Endothelial cell of umbilical vein (primary cell): ENCODE measurements at regions of chr16 and their contacts with region 1.

Region 1: DNA sequence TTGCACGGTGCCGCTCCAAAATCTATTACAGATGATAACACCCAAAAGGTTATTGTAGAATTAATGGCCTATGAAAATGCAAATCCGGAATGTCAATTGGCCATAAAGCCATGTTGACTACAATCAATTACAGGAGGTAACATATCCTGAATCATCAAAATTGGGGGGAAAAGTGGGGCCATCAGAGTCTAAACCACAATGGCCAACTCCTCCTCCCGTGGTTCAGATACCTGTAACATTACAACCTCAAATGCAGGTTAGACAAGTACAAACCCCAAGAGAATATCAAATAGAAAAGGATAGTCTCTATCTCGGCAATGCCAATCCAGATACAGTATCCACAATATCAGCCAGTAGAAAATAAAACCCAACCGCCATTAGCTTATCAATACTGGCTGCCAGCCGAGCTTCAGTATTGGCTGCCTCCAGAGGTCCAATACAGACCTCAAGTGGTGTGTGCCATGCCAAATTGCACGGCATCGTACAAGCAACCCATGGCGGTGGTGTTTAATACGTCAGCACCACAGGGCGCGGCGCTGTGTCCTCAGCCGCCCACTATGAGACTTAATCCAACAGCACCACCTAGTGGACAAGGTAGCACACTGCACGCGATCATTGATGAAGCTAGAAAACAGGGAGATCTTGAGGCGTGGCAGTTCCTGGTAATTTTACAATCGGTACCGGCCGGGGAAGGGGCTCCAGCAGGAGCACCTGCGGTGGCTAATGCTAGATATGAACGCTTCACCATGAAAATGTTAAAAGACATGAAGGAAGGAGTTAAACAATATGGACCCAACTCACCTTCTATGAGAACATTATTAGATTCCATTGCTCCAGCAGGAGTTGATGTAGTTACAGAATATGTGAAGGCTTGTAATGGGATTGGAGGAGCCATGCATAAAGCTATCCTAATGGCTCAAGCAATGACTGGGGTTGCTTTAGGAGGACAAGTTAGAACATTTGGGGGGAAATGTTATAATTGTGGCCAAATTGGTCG is 15.2 kb downstream of the FLYWCH1 start:
- DNase-seq: peak; percentile 81
- H3K4me3 ChIP-seq: peak overlapping the region in 1 of 3 experiments; percentile 7
- H3K27ac ChIP-seq: no peak overlapping the region
- H3K4me1 ChIP-seq: peaks cover 2% of the 10 kb centered on the region
- H3K27me3 ChIP-seq: no peaks in the 10 kb centered on the region
- CTCF ChIP-seq: peak; percentile 83 to 94
- POLR2A ChIP-seq: no peak

Region 2: GRCh38 chr16:2874912-2875362 is 52.0 kb before region 1 on chr16:
- CTCF ChIA-PET with region 1: interaction called, 15 read pairs
- POLR2A ChIA-PET with region 1: no interaction called
- dilution Hi-C with region 1: no loop called
- intact Hi-C with region 1: loop called (anchors 1 kb)
- DNase-seq: peak; percentile 63
- H3K4me3 ChIP-seq: no peak overlapping the region
- H3K27ac ChIP-seq: no peak overlapping the region
- H3K4me1 ChIP-seq: no peaks in the 10 kb centered on the region
- H3K27me3 ChIP-seq: peaks cover 0 to 2% of the 10 kb centered on the region in 2 experiments
- CTCF ChIP-seq: peak; percentile 98
- POLR2A ChIP-seq: no peak

Region 3: DNA sequence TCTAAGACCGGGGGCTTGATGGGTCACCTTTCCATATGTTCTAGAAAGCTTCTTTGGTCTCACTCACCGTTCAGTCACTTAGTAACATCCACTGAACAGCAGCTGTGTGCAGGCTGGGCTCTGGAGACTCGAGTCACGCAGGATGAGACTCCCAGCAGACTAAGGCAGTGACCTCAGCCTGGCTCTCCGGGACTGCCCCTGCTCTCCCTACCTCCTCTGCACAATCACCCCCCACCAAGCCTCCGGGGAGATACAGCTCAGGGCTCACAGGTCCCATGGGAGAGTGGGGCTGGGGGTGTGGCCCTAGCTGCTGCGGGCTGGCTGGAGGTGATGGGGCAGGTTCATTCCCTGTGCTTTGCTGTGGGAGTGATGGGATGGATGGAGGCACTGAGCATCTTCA is 29.8 kb before region 1 on chr16:
- CTCF ChIA-PET with region 1: interaction called, 14 read pairs
- POLR2A ChIA-PET with region 1: no interaction called
- dilution Hi-C with region 1: no loop called
- intact Hi-C with region 1: no loop called
- DNase-seq: no peak
- H3K4me3 ChIP-seq: no peak overlapping the region
- H3K27ac ChIP-seq: no peak overlapping the region
- H3K4me1 ChIP-seq: no peaks in the 10 kb centered on the region
- H3K27me3 ChIP-seq: no peaks in the 10 kb centered on the region
- CTCF ChIP-seq: no peak
- POLR2A ChIP-seq: no peak

Region 4: GRCh38 chr16:2911580-2912329 is 15.2 kb before region 1 on chr16 and contains the start of gene FLYWCH1:
- CTCF ChIA-PET with region 1: interaction called, 24 read pairs
- POLR2A ChIA-PET with region 1: no interaction called
- dilution Hi-C with region 1: no loop called
- intact Hi-C with region 1: no loop called
- DNase-seq: peak; percentile 98
- H3K4me3 ChIP-seq: peak within 1 kb of the TSS; percentile 84 to 96 (median 89)
- H3K27ac ChIP-seq: peak within 1 kb of the TSS; percentile 70
- H3K4me1 ChIP-seq: peaks cover 23% of the 10 kb centered on the region
- H3K27me3 ChIP-seq: no peaks in the 10 kb centered on the region
- CTCF ChIP-seq: no peak
- POLR2A ChIP-seq: no peak
- total RNA-seq, gene FLYWCH1: 51.2 and 51.7 TPM in 2 replicates

Region 5: DNA sequence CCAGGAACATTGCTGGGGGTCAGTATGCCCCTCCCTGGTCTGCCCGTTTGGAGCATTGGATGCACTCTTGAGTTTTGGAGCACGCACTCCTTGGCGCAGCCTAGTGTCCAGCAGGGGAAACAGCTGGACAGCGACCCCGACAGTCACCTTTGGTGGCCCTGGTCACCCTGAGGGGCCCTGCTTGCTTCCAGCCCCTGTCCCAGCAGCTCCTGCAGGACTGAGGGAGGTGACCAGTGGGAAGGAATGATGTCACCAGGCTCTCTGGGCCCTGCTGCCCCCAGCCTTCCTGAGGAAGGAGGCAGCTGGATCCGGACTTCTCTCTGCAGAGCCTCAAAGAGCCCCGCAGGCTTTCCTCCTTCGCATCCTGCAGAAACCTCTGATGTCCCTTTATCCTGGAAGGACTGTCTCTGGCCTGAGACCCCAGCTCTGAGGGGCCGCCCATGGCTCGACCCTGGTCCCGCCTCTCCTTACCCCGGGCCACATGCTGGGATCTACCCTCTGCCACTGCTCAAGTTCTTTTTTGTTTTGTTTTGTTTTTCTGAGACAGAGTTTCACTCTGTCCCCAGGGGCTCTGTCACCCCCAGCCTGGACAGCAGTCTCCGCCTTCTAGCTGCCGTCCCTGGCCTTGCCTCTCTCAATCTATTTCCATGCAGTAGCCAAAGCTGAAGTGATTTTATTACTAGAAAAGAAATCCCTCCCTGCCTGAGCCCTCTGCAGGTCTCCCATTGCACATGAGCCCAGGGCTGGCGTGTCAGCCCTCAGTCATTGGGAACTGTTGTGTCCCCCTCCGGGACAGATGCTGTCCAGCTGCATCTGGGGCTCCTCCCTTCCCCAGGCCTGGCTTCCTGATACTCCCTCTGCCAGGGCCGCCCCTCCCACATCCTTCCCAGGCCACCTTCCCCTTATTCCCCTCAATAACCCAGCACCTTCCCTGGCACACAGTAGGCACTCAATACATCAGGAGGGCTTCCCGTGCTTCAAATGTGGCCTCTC is 160.6 kb after region 1 on chr16:
- CTCF ChIA-PET with region 1: no interaction called
- POLR2A ChIA-PET with region 1: no interaction called
- dilution Hi-C with region 1: no loop called
- intact Hi-C with region 1: no loop called
- DNase-seq: peak; percentile 89
- H3K4me3 ChIP-seq: peak overlapping the region in 1 of 3 experiments; percentile 5
- H3K27ac ChIP-seq: peak overlapping the region; percentile 73
- H3K4me1 ChIP-seq: peaks cover 25% of the 10 kb centered on the region
- H3K27me3 ChIP-seq: no peaks in the 10 kb centered on the region
- CTCF ChIP-seq: peak; percentile 3 to 23
- POLR2A ChIP-seq: peak; percentile 52